Tibial artery (tissue), 4 donors: ENCODE measurements at regions of chr12 and their contacts with region 1.

Region 1: GRCh38 chr12:127998987-127999386 is 268.0 kb upstream of the TMEM132C start:
- DNase-seq: no peak
- H3K4me3 ChIP-seq: no peak overlapping the region
- H3K27ac ChIP-seq: no peak overlapping the region
- H3K4me1 ChIP-seq: no peaks in the 10 kb centered on the region
- H3K27me3 ChIP-seq: no peaks in the 10 kb centered on the region
- CTCF ChIP-seq: no peak

Region 2: DNA sequence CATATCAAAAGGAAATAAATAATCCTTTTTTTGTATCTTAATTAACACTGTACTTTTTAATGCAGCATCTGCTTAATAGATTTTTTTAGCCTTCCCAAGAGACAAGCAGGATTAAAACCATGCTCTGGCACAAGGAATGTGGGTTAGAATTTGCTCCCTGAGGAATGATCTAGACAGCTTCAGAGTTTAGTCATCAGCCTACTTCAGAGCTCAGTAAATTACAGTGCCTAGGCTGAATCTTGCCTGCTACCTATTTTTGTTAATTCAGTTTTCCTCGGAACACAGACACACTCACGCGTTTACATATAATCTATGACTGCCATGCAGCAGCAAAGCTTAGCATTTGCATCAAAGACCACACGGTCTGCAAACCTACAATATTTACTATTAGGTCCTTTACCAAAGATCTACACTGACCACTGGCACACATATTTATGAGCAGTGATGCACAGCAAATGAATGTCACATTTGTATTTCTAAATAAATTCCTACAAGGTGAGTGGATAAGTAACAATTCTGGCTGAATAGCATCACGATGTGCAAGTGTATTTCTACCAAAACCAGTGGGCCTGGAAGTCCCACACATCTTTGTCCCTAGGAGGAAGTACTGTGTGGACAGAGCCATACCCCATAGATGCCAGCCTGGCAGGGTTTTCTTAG is 41.9 kb before region 1 on chr12:
- intact Hi-C with region 1: loop called (anchors 2 kb)
- DNase-seq: no peak
- H3K4me3 ChIP-seq: no peak overlapping the region
- H3K27ac ChIP-seq: no peak overlapping the region
- H3K4me1 ChIP-seq: peaks cover 0 to 10% (median 0%) of the 10 kb centered on the region in 4 donors
- H3K27me3 ChIP-seq: no peaks in the 10 kb centered on the region
- CTCF ChIP-seq: no peak